AG04449 (cell line): ENCODE measurements at regions of chr5 and their contacts with region 1.

Region 1: DNA sequence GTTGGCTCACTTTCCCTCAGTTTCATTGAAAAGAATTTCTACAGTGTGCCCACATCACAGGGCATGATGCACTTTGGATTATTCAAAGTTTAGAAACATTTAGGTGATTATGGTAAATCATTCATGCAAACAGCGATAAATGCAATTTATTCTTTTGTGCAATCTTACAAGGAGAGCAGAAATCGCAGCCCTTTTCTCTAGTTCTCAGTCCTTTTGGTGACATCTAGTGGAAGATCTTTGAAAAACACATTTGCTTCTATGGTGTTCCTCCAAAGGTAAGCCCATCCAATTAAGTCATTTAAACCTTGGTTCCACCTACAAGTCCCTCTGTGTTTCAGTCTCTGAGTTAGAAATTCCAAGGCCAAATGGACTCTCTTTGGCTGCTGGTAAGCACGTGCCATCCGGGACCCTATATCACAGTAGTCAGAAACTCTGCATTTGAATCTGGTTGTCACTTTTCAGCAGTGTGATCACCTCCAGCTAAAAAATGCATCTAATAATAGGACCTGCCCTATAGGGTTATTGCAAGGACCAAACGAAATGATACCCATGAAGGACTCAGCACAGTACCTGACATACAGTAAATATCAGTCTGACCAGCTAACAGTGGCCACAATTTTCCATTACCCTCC is 66.4 kb downstream of the MACROH2A1 start:
- DNase-seq: no peak
- H3K4me3 ChIP-seq: no peak overlapping the region
- CTCF ChIP-seq: peak; percentile 32

Region 2: GRCh38 chr5:135208903-135209721 is 123.5 kb before region 1 on chr5:
- CTCF ChIA-PET with region 1: interaction called, 22 read pairs
- POLR2A ChIA-PET with region 1: no interaction called
- DNase-seq: peak; percentile 91
- H3K4me3 ChIP-seq: no peak overlapping the region
- CTCF ChIP-seq: peak; percentile 44

Region 3: DNA sequence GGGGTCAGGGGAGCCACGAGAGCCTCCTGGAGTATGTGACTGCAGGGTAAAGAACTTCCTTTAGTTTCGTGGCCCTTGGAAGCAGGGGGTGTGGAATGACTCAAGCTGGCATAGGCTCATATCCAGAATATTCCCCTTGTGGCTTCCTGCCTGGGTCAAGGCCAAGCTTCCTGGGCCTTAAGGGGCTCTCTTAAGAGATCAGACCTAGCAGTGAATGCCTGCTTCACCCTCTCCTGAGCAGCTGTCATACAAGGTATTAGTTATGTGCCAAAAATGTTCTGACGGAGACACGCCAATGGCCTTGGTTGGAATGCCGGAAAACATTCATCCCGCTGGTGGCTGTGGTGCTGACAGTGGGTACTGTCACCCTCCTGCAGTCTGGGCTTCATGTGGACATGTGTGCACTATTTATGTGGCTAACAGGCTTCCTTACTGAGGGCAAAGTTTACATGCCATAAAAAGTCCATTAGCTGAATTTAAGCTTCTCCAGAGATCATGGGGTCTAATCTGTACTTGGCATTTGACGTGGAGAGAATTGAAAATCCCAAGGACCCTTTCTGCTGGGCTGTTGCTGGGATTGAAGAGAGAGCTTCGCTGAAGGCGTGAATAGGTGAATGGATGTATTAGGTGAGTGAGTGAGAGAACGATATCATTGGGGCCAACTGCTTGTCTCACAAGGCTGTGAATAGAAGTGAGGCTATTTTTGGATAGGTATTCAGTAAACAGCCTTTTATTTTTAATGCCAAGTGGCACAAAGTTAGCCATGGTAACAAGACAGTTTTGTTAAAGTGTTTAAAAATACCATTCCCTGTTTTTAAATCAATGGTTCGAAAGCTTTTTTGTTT is 90.4 kb before region 1 on chr5:
- CTCF ChIA-PET with region 1: no interaction called
- POLR2A ChIA-PET with region 1: no interaction called
- DNase-seq: peak; percentile 49
- H3K4me3 ChIP-seq: no peak overlapping the region
- CTCF ChIP-seq: no peak

Region 4: GRCh38 chr5:135343413-135343812 is 10.8 kb after region 1 on chr5:
- CTCF ChIA-PET with region 1: interaction called, 34 read pairs
- POLR2A ChIA-PET with region 1: no interaction called
- DNase-seq: no peak
- H3K4me3 ChIP-seq: no peak overlapping the region
- CTCF ChIP-seq: no peak

Region 5: GRCh38 chr5:135921388-135921787 is 588.8 kb after region 1 on chr5:
- CTCF ChIA-PET with region 1: no interaction called
- POLR2A ChIA-PET with region 1: no interaction called
- DNase-seq: no peak
- H3K4me3 ChIP-seq: no peak overlapping the region
- CTCF ChIP-seq: no peak